Activated CD4-positive, alpha-beta memory T cell treated with anti-CD3 and anti-CD28 coated beads for 36 hours (primary cell): ENCODE measurements at regions of chr11 and their contacts with region 1.

Region 1: GRCh38 chr11:121194731-121195596 is 93.9 kb downstream of the TECTA start:
- DNase-seq: peak; percentile 53
- H3K4me3 Mint-ChIP-seq: no peak overlapping the region
- H3K27ac Mint-ChIP-seq: no peak overlapping the region
- H3K4me1 Mint-ChIP-seq: peaks cover 3% of the 10 kb centered on the region
- H3K27me3 Mint-ChIP-seq: peaks cover 16% of the 10 kb centered on the region

Region 2: GRCh38 chr11:120929664-120930154 is 265.3 kb before region 1 on chr11:
- CTCF ChIA-PET with region 1: interaction called, 11 read pairs
- POLR2A ChIA-PET with region 1: no interaction called
- intact Hi-C with region 1: loop called (anchors 1 kb)
- DNase-seq: peak; percentile 57
- H3K4me3 Mint-ChIP-seq: no peak overlapping the region
- H3K27ac Mint-ChIP-seq: no peak overlapping the region
- H3K4me1 Mint-ChIP-seq: no peaks in the 10 kb centered on the region
- H3K27me3 Mint-ChIP-seq: no peaks in the 10 kb centered on the region

Region 3: DNA sequence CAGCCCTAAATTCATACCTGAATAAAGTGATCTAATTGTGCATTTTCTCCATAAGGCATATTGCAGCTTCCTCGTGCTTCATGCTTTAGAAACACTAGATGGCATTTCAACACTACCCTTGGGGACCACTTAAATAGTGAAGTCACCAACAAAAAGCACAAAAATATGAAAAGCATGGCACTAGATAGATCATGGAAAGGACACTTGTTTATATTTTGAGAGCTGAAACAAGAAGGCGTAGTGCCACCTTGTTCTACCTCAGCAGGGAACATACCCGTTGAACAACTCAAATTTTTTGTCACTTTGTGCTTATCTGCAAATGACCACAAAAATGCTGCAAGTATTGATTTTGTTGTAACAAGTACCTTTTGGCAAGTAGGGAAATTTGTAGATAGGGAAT is 162.4 kb before region 1 on chr11:
- CTCF ChIA-PET with region 1: no interaction called
- POLR2A ChIA-PET with region 1: no interaction called
- intact Hi-C with region 1: loop called (anchors 10 kb)
- DNase-seq: no peak
- H3K4me3 Mint-ChIP-seq: no peak overlapping the region
- H3K27ac Mint-ChIP-seq: no peak overlapping the region
- H3K4me1 Mint-ChIP-seq: peaks cover 23% of the 10 kb centered on the region
- H3K27me3 Mint-ChIP-seq: no peaks in the 10 kb centered on the region

Region 4: DNA sequence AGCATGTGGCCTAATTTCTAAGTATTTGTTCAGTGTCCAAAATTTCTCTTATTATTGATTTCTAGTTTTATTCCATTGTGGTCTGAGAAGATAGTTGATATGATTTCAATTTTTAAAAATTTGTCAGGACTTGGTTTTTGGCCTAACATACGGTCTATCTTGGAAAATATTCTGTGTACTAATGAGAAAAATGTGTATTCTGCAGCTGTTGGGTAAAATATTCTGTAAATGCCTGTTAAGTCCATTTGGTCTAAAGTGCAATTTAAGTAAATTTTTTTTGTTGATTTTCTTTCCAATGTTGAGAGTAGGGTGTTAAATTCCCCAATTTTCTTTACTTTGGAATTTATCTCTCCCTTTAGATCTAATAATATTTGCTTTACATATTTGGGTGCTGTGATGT is 15.7 kb before region 1 on chr11:
- CTCF ChIA-PET with region 1: interaction called, 18 read pairs
- POLR2A ChIA-PET with region 1: no interaction called
- intact Hi-C with region 1: no loop called
- DNase-seq: no peak
- H3K4me3 Mint-ChIP-seq: no peak overlapping the region
- H3K27ac Mint-ChIP-seq: no peak overlapping the region
- H3K4me1 Mint-ChIP-seq: no peaks in the 10 kb centered on the region
- H3K27me3 Mint-ChIP-seq: peaks cover 5% of the 10 kb centered on the region

Region 5: DNA sequence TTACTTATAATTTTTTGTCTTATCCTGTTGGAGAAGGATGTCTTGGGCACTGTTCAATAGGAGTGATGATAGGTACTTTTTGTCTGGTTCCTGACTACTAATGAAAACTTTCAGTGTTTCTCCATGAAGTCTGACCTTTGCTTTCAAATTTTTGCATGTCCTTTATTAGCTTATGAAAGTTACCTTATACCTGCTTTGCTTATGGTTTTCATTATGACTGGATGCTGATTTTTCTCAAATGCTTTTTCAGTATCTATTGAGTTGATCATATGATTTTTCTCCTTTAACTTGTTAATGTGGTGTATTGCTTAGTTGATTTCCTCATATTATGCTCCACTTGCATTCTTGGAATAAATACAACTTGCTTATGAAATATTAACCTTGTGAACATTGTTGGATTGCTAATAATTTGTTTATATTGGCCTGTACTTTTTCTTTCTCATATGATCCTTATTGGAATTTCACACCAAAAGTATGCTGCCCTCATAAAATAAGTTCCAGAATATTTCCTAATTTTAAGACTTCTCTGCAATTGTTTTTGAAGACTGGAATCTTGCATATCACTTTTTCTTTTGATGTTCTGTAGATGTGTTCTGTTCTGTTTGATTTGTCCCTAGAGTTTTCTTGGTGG is 12.6 kb after region 1 on chr11:
- CTCF ChIA-PET with region 1: interaction called, 10 read pairs
- POLR2A ChIA-PET with region 1: no interaction called
- intact Hi-C with region 1: no loop called
- DNase-seq: no peak
- H3K4me3 Mint-ChIP-seq: no peak overlapping the region
- H3K27ac Mint-ChIP-seq: no peak overlapping the region
- H3K4me1 Mint-ChIP-seq: no peaks in the 10 kb centered on the region
- H3K27me3 Mint-ChIP-seq: peaks cover 19% of the 10 kb centered on the region